Naive thymus-derived CD4-positive, alpha-beta T cell (primary cell): ENCODE measurements at regions of chr15 and their contacts with region 1.

Region 1: DNA sequence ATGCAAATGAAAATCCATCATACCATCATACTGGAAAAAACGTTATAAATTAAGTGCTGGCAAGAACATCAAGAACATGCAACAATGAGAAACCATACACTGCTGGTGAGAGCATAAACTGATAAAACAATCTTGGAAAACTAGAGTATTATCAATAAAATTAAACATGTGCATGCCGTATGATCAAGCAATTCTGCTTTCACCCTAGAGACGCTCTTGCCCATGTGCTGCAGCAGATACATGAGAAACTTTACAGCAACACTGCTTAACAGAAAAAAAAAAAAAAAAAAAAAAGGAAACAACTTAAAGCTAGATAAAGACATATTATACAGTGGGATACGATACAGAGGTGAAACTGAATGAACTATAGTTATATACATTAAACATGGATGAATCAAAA is 21.8 kb downstream of the SPG11 start:
- DNase-seq: no peak
- ATAC-seq: no peak
- H3K4me3 ChIP-seq: no peak overlapping the region
- H3K4me3 Mint-ChIP-seq: no peak overlapping the region
- H3K27ac ChIP-seq: no peak overlapping the region
- H3K27ac Mint-ChIP-seq: no peak overlapping the region
- H3K4me1 ChIP-seq: peaks cover 0 to 3% of the 10 kb centered on the region in 2 donors
- H3K4me1 Mint-ChIP-seq: peaks cover 17 to 59% (median 37%) of the 10 kb centered on the region in 7 donors
- H3K27me3 ChIP-seq: no peaks in the 10 kb centered on the region
- H3K27me3 Mint-ChIP-seq: no peaks in the 10 kb centered on the region

Region 2: GRCh38 chr15:44606740-44607139 is 34.9 kb before region 1 on chr15:
- CTCF ChIA-PET with region 1: no interaction called
- POLR2A ChIA-PET with region 1: no interaction called
- intact Hi-C with region 1: loop called in 1 of 2 experiments (anchors 5 kb)
- DNase-seq: no peak
- ATAC-seq: no peak
- H3K4me3 ChIP-seq: no peak overlapping the region
- H3K4me3 Mint-ChIP-seq: no peak overlapping the region
- H3K27ac ChIP-seq: no peak overlapping the region
- H3K27ac Mint-ChIP-seq: peak overlapping the region in 5 of 9 donors; percentile 17 to 67 (median 26)
- H3K4me1 ChIP-seq: no peaks in the 10 kb centered on the region
- H3K4me1 Mint-ChIP-seq: peaks cover 0 to 4% (median 0%) of the 10 kb centered on the region in 7 donors
- H3K27me3 ChIP-seq: no peaks in the 10 kb centered on the region
- H3K27me3 Mint-ChIP-seq: no peaks in the 10 kb centered on the region

Region 3: DNA sequence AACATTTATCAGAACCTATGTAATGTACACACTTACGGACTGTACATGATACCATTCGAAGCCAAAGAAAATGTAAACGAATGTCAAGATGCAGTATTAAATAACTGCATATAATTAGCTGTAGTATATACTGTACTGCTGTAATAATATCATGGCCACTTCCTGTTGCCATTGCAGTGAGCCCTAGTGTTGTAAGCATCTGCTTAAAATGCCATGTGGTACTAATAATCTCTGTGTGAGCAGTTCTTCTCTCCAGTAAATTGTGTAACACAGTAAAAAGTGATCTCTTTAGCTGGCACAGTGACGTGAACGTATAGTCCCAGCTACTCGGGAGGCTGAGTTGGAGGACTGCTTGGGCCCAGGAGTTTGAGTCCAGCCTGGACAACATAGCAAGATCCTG is 13.2 kb after region 1 on chr15:
- CTCF ChIA-PET with region 1: no interaction called
- POLR2A ChIA-PET with region 1: no interaction called
- intact Hi-C with region 1: loop called in 1 of 2 experiments (anchors 2 kb)
- DNase-seq: no peak
- ATAC-seq: no peak
- H3K4me3 ChIP-seq: no peak overlapping the region
- H3K4me3 Mint-ChIP-seq: no peak overlapping the region
- H3K27ac ChIP-seq: no peak overlapping the region
- H3K27ac Mint-ChIP-seq: peak overlapping the region in 1 of 9 donors; percentile 31
- H3K4me1 ChIP-seq: no peaks in the 10 kb centered on the region
- H3K4me1 Mint-ChIP-seq: peaks cover 18 to 58% (median 49%) of the 10 kb centered on the region in 7 donors
- H3K27me3 ChIP-seq: no peaks in the 10 kb centered on the region
- H3K27me3 Mint-ChIP-seq: no peaks in the 10 kb centered on the region